ENCODE measurements at regions of chr13 and their contacts with region 1.

Region 1: DNA sequence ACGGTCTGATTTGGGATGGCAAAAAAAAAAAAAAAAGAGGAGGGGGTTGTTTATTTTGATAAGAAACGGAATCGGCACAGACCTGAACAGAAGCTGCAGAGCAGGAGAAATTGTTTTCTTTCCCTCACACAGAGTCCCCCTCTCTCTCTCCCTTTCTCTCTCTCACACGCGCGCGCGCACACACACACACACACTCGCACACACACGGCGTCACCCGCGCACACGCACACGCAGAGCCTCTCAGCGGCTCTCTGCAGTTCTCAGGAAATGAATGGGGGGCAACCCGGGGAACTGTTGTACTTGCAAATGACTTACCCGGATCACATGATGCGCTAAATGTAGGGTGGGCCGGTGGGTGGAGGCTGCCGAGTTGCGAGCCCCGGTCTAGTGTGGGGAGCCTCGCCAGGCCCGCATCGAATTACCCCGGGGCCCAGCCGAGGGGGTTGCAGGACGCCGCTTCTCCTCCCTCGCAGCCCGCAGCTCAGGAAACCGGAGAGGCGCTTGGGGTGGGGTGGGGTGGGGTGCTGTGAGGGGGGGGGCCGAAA is 475 bp downstream of the KLF12 start:
- DNase-seq: peak; percentile 92
- ATAC-seq: peak; percentile 66

Region 2: DNA sequence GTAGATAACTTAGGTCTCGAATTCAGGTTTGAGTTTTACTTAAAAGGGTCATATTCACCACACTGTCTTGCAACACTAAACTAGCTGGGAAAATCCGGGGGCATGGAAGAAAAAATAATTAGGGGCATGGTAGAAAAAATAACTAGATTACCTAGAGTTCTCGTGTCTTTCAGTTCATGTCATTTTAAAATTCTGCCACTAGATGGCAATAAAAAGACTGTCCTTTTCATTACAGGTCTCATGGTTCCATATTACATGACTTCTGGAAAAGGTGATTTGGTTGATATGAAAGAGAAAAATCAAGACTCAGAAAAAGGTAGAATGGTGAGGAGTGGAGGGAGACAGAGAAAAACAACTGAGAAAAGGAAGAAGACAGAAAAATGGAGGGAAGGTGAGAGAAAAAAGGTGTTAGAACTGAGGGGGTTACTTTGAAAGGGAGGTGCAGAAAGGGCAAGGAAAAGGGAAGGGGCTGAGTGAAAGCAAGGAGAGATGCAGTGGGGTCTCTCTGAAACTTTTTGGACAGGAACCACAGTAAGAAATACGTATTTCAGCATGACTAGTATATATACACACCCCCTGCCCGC is 298.5 kb before region 1 on chr13:
- intact Hi-C with region 1: loop called (anchors 10 kb)
- DNase-seq: no peak
- ATAC-seq: peak; percentile 74

Region 3: DNA sequence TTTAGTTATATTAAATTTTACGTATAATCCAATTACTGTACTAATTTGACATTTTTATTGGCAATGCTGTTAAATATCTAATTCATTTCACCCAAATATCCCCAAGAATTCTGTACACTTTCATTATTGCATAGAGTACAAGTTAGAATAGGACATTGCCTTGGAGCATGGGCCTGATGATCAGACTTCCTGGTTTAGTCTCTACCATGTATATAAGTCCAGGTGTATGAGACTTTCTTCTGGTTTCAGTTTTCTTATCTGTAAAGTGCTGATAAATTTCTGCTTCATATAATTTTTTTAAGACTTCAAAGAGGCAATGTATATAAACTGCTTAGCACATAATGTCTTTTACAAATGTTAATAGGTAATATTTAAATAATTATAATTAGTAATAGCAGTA is 178.9 kb before region 1 on chr13:
- intact Hi-C with region 1: loop called (anchors 10 kb)
- DNase-seq: no peak
- ATAC-seq: no peak

Region 4: GRCh38 chr13:73967397-73968165 is 166.1 kb before region 1 on chr13:
- intact Hi-C with region 1: no loop called
- DNase-seq: no peak
- ATAC-seq: peak; percentile 16

Measured in Right ventricle myocardium superior (tissue), 1 donor.